ENCODE measurements at regions of chr1 and their contacts with region 1.

Region 1: GRCh38 chr1:117001254-117001927 is at the start of gene CD101:
- DNase-seq: peak; percentile 82
- ATAC-seq: peak; percentile 95
- H3K4me3 ChIP-seq: peak within 1 kb of the TSS; percentile 6; the same call in 1 of the 2 replicates
- H3K27ac ChIP-seq: peak within 1 kb of the TSS; percentile 49
- H3K4me1 ChIP-seq: peaks cover 20% of the 10 kb centered on the region
- H3K27me3 ChIP-seq: no peaks in the 10 kb centered on the region
- CTCF ChIP-seq: no peak
- EP300 ChIP-seq: peak; percentile 66 to 85
- POLR2A ChIP-seq: no peak
- RAD21 ChIP-seq: peak; percentile 36; the same call in 1 of the 2 replicates
- polyA plus RNA-seq, gene CD101: 1.9 to 2.7 TPM

Region 2: DNA sequence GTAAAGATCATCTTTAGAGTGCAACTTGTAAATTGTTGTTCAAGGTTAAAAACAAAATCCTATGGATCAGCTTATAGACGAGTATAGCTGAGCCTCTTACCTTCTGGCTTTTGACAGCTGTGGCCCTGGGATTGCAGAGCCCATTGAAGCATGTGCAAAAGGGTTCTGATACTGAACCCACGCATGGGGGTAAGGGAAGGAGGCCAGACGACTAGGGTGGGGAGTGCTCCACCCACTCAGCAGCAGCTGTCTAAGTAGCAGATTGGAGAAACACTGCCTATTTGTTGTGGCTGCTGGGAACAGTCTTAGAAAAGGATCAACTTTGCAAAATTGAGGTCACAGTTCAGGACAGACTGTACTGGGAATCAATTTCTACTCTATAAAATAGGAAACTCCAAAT is 16.3 kb after region 1 on chr1:
- CTCF ChIA-PET with region 1: interaction called, 9 read pairs
- POLR2A ChIA-PET with region 1: interaction called, 6 read pairs
- RAD21 ChIA-PET with region 1: interaction called, 15 read pairs
- SMC1A ChIA-PET with region 1: interaction called, 18 read pairs
- in situ Hi-C with region 1: no loop called
- intact Hi-C with region 1: no loop called
- DNase-seq: no peak
- ATAC-seq: peak; percentile 69
- H3K4me3 ChIP-seq: no peak overlapping the region
- H3K27ac ChIP-seq: no peak overlapping the region
- H3K4me1 ChIP-seq: peaks cover 5% of the 10 kb centered on the region; the same call in 1 of the 2 replicates
- H3K27me3 ChIP-seq: no peaks in the 10 kb centered on the region
- CTCF ChIP-seq: no peak
- EP300 ChIP-seq: no peak
- POLR2A ChIP-seq: no peak
- RAD21 ChIP-seq: no peak

Measured in GM12878 (cell line).